A673 (cell line): ENCODE measurements at regions of chr22 and their contacts with region 1.

Region 1: DNA sequence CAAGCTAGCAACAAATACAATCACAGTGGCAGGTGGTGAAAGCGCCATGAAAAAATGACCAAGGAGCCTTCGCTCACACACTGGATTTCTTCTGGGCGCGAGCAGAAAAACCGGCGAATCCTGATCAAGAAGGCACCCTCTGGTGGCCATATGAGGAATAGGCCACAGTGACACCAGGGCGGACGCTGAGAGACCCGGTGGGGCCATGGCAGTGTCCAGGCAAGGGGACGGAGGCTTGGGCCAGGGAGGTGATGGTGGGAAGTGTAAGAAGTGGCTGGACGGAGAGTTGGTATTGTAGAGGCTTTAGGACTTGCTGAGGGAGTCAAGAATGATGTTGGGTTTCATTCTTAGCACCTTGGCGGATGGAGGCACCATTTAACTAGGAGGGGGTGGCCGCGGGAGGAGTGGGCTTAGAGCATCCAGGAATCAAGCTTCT is 16.9 kb upstream of the RAC2 start:
- DNase-seq: peak; percentile 58
- H3K4me3 ChIP-seq: no peak overlapping the region
- H3K27ac ChIP-seq: no peak overlapping the region
- H3K4me1 ChIP-seq: peaks cover 15% of the 10 kb centered on the region
- H3K27me3 ChIP-seq: no peaks in the 10 kb centered on the region
- CTCF ChIP-seq: peak; percentile 90

Region 2: GRCh38 chr22:37121887-37122591 is 138.9 kb before region 1 on chr22:
- CTCF ChIA-PET with region 1: no interaction called
- POLR2A ChIA-PET with region 1: no interaction called
- intact Hi-C with region 1: no loop called
- DNase-seq: no peak
- H3K4me3 ChIP-seq: no peak overlapping the region
- H3K27ac ChIP-seq: no peak overlapping the region
- H3K4me1 ChIP-seq: no peaks in the 10 kb centered on the region
- H3K27me3 ChIP-seq: no peaks in the 10 kb centered on the region
- CTCF ChIP-seq: no peak

Region 3: GRCh38 chr22:37231406-37232139 is 29.3 kb before region 1 on chr22:
- CTCF ChIA-PET with region 1: interaction called, 12 read pairs
- POLR2A ChIA-PET with region 1: no interaction called
- intact Hi-C with region 1: no loop called
- DNase-seq: no peak
- H3K4me3 ChIP-seq: no peak overlapping the region
- H3K27ac ChIP-seq: no peak overlapping the region
- H3K4me1 ChIP-seq: peaks cover 15% of the 10 kb centered on the region
- H3K27me3 ChIP-seq: no peaks in the 10 kb centered on the region
- CTCF ChIP-seq: no peak

Region 4: DNA sequence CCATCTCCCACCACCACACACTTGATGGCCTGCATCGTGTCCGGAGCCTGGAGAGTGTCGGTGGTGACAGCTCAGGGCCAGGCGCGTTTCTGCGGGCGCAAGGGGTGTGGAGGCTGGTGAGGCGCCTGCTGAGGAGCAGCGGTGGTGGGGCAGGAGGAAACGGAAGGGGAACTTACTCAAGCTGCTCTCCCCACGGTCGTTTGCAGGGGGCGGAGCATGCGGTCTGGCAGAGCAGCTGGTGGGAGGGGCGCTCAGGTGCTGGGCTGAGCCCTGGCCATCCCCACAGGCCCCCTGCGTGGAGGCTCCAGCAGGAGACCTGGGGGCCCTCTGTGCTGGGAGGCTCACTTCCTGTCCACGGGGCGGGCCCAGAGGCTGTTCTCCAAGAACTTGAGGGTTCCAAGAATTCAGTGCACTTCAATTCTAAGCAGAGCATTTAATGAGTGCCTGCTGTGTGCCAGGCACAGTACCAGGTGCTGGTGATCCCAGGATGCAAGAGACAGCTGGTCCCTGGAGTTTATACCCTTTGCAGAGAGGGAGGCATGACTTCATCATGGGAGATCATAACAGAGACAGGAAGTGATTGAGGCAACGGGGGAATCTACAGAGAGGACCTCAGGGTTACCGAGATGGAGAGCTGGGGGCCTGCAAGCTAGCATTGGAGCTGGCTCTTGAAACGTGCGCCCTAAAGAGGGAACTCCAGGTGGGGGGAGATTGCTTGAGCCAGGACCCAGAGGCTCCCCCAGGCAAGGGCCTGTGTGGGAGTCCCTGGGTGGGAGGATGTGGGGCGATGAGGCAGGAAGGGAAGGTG is 16.6 kb before region 1 on chr22 and contains the start of gene RAC2:
- CTCF ChIA-PET with region 1: interaction called, 11 read pairs
- POLR2A ChIA-PET with region 1: no interaction called
- intact Hi-C with region 1: no loop called
- DNase-seq: peak; percentile 75
- H3K4me3 ChIP-seq: peak within 1 kb of the TSS; percentile 42
- H3K27ac ChIP-seq: peak within 1 kb of the TSS; percentile 52
- H3K4me1 ChIP-seq: peaks cover 11% of the 10 kb centered on the region
- H3K27me3 ChIP-seq: no peaks in the 10 kb centered on the region
- CTCF ChIP-seq: no peak
- total RNA-seq, gene RAC2: 4.0 and 5.8 TPM in 2 replicates